Caco-2 (cell line): ENCODE measurements at regions of chr3 and their contacts with region 1.

Region 1: DNA sequence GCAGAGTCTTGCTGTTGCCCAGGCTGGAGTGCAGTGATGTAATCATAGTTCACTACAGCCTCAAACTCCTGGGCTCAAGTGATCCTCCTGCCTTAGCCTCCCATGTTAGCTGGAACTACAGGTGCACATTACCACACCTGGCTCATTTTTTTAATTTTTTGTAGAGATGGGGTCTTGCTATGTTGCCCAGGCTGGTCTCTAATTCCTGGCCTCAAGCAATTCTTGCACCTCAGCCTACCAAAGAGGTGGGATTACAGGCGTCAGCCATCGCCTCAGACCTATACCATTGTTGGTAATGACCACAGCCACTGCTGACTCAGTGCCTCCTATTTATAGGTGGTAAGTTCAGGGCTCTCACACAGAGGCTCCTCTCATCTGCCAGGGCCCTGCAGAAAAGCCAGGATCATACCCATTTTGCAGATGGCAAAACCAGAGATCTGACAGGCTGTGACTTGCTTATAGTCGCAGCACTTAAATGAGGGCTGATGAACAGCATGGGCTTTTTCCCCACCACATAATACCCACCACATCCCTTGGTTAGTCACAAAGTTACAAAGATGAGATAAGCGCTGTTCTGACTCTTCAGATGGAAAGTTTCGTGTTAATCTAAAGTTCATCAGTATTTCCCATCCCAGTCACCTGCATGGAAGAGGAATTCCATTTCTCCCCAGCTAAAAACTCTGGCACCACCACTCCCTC is 21.8 kb upstream of the SPATA12 start:
- DNase-seq: no peak
- H3K4me3 ChIP-seq: no peak overlapping the region
- H3K4me3 Mint-ChIP-seq: no peak overlapping the region
- H3K27ac Mint-ChIP-seq: no peak overlapping the region
- H3K4me1 ChIP-seq: peaks cover 12% of the 10 kb centered on the region
- H3K4me1 Mint-ChIP-seq: peaks cover 17% of the 10 kb centered on the region
- H3K27me3 ChIP-seq: no peaks in the 10 kb centered on the region
- H3K27me3 Mint-ChIP-seq: no peaks in the 10 kb centered on the region
- CTCF ChIP-seq: no peak

Region 2: GRCh38 chr3:56997675-56998074 is 40.9 kb before region 1 on chr3:
- CTCF ChIA-PET with region 1: no interaction called
- POLR2A ChIA-PET with region 1: no interaction called
- intact Hi-C with region 1: no loop called
- DNase-seq: peak in 1 of 2 experiments; percentile 23
- H3K4me3 ChIP-seq: no peak overlapping the region
- H3K4me3 Mint-ChIP-seq: no peak overlapping the region
- H3K27ac Mint-ChIP-seq: peak overlapping the region; percentile 82
- H3K4me1 ChIP-seq: peaks cover 14% of the 10 kb centered on the region
- H3K4me1 Mint-ChIP-seq: peaks cover 34% of the 10 kb centered on the region
- H3K27me3 ChIP-seq: no peaks in the 10 kb centered on the region
- H3K27me3 Mint-ChIP-seq: no peaks in the 10 kb centered on the region
- CTCF ChIP-seq: no peak

Region 3: DNA sequence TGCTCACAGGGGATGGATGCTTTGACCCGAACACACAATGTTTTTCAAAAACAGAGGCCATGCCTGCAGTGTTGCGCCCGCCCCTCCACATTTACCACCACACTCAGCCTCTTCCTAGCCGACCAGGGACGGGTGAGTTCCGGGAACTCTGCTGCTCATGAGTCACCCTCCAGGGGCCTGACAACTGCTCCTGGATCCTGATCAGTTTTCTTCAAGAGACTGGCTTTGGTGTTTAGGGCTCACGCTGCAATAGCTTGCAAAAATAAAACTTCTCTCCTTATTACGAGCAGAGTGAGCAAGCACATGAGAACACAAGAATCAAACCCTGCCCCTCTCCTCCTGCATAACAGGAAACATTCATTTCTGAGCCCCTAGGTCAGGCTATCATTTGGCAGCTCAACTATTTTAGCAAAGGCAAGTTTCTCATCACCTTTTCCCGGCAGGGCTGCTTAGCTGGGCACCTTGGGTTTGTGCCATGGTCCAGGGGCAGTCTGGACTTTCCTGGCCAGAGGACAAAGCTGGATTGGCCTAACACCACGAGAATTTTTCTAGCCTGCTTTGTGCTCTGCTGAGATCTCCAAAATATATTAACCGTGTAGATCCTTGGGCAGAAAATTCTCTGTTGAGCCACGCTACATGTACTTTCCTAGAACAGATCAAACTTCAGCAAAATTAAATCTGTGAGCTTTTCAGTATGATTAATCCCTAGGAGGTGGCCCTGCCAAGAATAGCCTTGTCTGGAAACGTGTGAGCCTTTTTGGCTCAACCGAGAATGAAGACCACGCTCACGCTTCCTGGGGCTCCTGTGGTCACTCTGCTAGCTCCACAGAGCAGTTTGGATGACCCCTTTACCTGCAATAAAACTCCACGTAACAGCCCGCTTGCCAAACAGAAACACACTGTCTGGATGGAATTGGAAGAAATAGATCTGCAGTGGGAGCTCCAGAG is 30.8 kb before region 1 on chr3:
- CTCF ChIA-PET with region 1: no interaction called
- POLR2A ChIA-PET with region 1: no interaction called
- intact Hi-C with region 1: loop called (anchors 1 kb)
- DNase-seq: no peak
- H3K4me3 ChIP-seq: no peak overlapping the region
- H3K4me3 Mint-ChIP-seq: no peak overlapping the region
- H3K27ac Mint-ChIP-seq: peak overlapping the region; percentile 86
- H3K4me1 ChIP-seq: peaks cover 4% of the 10 kb centered on the region; the same call in 1 of the 2 replicates
- H3K4me1 Mint-ChIP-seq: peaks cover 6% of the 10 kb centered on the region
- H3K27me3 ChIP-seq: no peaks in the 10 kb centered on the region
- H3K27me3 Mint-ChIP-seq: no peaks in the 10 kb centered on the region
- CTCF ChIP-seq: no peak